CD4-positive, alpha-beta memory T cell (primary cell): ENCODE measurements at regions of chr7 and their contacts with region 1.

Region 1: GRCh38 chr7:604001-604883 is 84.6 kb upstream of the PDGFA start:
- DNase-seq: peak; percentile 86 to 97 (median 91)
- H3K4me3 ChIP-seq: peak overlapping the region; percentile 20 to 54
- H3K4me3 Mint-ChIP-seq: peak overlapping the region; percentile 87 to 95 (median 91)
- H3K27ac ChIP-seq: peak overlapping the region; percentile 98
- H3K27ac Mint-ChIP-seq: peak overlapping the region; percentile 99 to 100 (median 100)
- H3K4me1 ChIP-seq: peaks cover 64% of the 10 kb centered on the region
- H3K4me1 Mint-ChIP-seq: peaks cover 28 to 71% (median 48%) of the 10 kb centered on the region in 4 donors
- H3K27me3 ChIP-seq: no peaks in the 10 kb centered on the region
- H3K27me3 Mint-ChIP-seq: no peaks in the 10 kb centered on the region

Region 2: DNA sequence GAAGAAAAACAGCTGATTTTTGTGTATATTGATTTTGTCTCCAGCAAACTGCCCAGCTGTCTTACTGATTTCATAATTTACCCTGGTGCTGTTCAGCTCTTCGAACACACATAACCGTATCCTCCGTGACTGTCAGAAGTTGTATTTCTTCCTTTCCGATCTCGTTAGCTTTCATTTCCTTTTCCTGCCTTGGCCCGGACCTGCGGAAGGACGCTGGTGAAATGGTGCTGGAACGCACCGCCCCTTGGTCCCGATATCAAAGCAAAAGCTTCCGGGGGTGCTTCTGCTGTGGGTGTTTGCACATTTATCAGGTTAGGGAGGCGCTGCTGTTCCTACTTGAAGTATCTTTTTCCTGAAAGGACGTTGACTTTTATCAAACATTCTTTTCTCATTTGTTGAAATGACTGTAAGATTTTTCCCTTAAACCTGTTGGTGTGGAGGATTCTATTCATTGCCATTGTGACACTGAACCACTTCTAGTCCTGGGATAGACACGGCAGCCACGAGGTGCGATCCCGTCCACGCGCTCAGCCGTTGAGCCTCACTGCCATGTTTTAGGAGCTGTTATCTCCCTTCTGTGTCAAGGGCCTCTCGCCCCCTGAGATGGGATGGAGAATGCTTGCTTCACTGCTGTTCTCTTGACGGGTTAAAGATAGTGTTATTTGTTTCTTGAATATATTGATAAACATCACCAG is 241.7 kb before region 1 on chr7:
- CTCF ChIA-PET with region 1: no interaction called
- POLR2A ChIA-PET with region 1: interaction called, 10 read pairs
- intact Hi-C with region 1: no loop called
- DNase-seq: peak; percentile 49 to 61 (median 56)
- H3K4me3 ChIP-seq: peak overlapping the region; percentile 13 to 21
- H3K4me3 Mint-ChIP-seq: peak overlapping the region; percentile 60 to 94 (median 76)
- H3K27ac ChIP-seq: peak overlapping the region; percentile 29
- H3K27ac Mint-ChIP-seq: peak overlapping the region; percentile 68 to 95 (median 85)
- H3K4me1 ChIP-seq: peaks cover 72% of the 10 kb centered on the region
- H3K4me1 Mint-ChIP-seq: peaks cover 40 to 68% (median 62%) of the 10 kb centered on the region in 4 donors
- H3K27me3 ChIP-seq: no peaks in the 10 kb centered on the region
- H3K27me3 Mint-ChIP-seq: no peaks in the 10 kb centered on the region

Region 3: GRCh38 chr7:584122-584465 is 20.1 kb before region 1 on chr7:
- CTCF ChIA-PET with region 1: interaction called, 3 read pairs
- POLR2A ChIA-PET with region 1: interaction called, 55 read pairs
- intact Hi-C with region 1: loop called (anchors 1 kb)
- DNase-seq: peak; percentile 85 to 98 (median 91)
- H3K4me3 ChIP-seq: peak overlapping the region; percentile 30 to 87
- H3K4me3 Mint-ChIP-seq: peak overlapping the region; percentile 87 to 98 (median 92)
- H3K27ac ChIP-seq: peak overlapping the region; percentile 77
- H3K27ac Mint-ChIP-seq: peak overlapping the region; percentile 87 to 98 (median 96)
- H3K4me1 ChIP-seq: peaks cover 25% of the 10 kb centered on the region
- H3K4me1 Mint-ChIP-seq: peaks cover 24 to 44% (median 36%) of the 10 kb centered on the region in 4 donors
- H3K27me3 ChIP-seq: no peaks in the 10 kb centered on the region
- H3K27me3 Mint-ChIP-seq: no peaks in the 10 kb centered on the region

Region 4: DNA sequence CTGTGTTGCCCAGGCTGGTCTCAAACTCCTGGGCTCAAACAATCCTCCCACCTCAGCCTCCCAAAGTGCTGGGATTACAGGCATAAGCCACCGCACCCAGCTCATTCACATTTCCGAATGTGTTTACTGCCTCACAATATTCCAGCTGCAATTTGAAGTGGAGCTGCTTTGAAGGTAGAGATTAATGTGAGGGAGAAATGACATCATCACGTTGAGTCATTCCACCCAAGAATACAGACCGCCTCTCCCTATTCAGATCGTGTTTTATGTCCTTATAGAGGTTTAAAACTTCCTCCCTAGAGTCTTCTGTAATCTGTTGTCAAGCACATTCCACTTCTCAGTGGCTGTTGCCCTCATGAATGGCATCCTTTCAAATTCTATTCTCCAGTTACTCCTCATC is 15.8 kb after region 1 on chr7:
- CTCF ChIA-PET with region 1: interaction called, 7 read pairs
- POLR2A ChIA-PET with region 1: interaction called, 200 read pairs
- intact Hi-C with region 1: loop called (anchors 1 kb)
- DNase-seq: no peak
- H3K4me3 ChIP-seq: no peak overlapping the region
- H3K4me3 Mint-ChIP-seq: peak overlapping the region in 3 of 8 donors; percentile 10 to 63 (median 46)
- H3K27ac ChIP-seq: no peak overlapping the region
- H3K27ac Mint-ChIP-seq: peak overlapping the region; percentile 85 to 100 (median 98)
- H3K4me1 ChIP-seq: peaks cover 49% of the 10 kb centered on the region
- H3K4me1 Mint-ChIP-seq: peaks cover 29 to 50% (median 37%) of the 10 kb centered on the region in 4 donors
- H3K27me3 ChIP-seq: no peaks in the 10 kb centered on the region
- H3K27me3 Mint-ChIP-seq: no peaks in the 10 kb centered on the region

Region 5: GRCh38 chr7:726084-726853 is 122.0 kb after region 1 on chr7 and contains the start of gene DNAAF5:
- CTCF ChIA-PET with region 1: no interaction called
- POLR2A ChIA-PET with region 1: interaction called, 3 read pairs
- intact Hi-C with region 1: loop called (anchors 1 kb)
- DNase-seq: peak; percentile 82 to 85 (median 85)
- H3K4me3 ChIP-seq: peak within 1 kb of the TSS; percentile 48 to 52
- H3K4me3 Mint-ChIP-seq: peak within 1 kb of the TSS; percentile 72 to 89 (median 84)
- H3K27ac ChIP-seq: peak within 1 kb of the TSS; percentile 62
- H3K27ac Mint-ChIP-seq: peak within 1 kb of the TSS; percentile 53 to 88 (median 76)
- H3K4me1 ChIP-seq: peaks cover 17% of the 10 kb centered on the region
- H3K4me1 Mint-ChIP-seq: peaks cover 18 to 29% (median 20%) of the 10 kb centered on the region in 4 donors
- H3K27me3 ChIP-seq: no peaks in the 10 kb centered on the region
- H3K27me3 Mint-ChIP-seq: no peaks in the 10 kb centered on the region
- total RNA-seq, gene DNAAF5: 15.9 to 19.4 TPM